ENCODE measurements at regions of chr7 and their contacts with region 1.

Region 1: DNA sequence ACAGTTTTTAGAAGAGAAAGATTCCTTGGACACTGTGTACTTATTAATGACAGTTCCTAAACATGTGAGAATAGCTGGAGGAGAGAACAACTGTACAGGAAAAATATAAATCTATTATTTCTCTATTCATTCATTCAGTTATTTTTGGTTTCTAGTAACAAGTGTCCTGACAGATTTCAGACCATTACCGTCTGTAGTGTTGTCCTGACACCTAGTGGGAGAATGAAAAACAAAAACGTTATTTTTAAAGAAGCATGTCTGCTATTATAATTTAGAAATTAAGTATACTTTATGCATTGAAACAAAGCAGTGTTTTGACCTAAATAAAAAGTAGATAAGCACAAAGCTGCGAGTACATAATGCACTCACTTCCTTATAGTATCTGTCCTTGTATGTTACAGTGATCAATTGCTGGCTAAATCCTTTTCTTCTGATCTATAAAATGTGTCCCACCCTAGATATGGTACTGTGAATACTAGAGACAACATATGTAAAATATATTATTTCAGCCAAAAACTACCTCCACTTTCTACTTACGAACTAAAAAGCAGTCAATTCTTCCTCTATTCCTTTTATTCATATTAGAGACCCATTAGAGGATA is 575.6 kb downstream of the ARL4A start:
- DNase-seq: peak; percentile 6
- CTCF ChIP-seq: peak; percentile 32

Region 2: GRCh38 chr7:12524794-12525386 is 738.1 kb before region 1 on chr7:
- CTCF ChIA-PET with region 1: interaction called, 10 read pairs
- POLR2A ChIA-PET with region 1: no interaction called
- DNase-seq: peak; percentile 17
- CTCF ChIP-seq: peak; percentile 54

Region 3: GRCh38 chr7:12638851-12639467 is 624.1 kb before region 1 on chr7:
- CTCF ChIA-PET with region 1: interaction called, 12 read pairs
- POLR2A ChIA-PET with region 1: no interaction called
- DNase-seq: peak; percentile 17
- CTCF ChIP-seq: peak; percentile 45

Region 4: DNA sequence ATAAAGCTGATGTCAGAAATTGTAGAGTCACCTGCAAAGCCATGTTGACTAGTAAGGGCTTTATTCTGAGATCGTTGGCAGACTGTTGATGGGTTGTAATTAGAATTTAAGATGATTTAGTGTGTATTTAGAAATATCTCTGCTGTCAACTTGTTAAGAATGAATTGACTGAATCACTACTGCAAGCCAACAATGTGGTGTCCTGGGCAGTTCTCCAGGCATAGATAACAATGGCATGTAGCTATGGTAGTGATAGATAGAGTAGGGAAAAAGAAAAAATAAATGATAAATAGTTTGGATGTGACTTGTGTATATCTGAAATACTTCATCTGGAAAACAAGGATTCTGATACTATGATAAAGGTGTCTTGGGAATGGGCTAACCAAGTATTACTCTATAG is 64.6 kb after region 1 on chr7:
- CTCF ChIA-PET with region 1: no interaction called
- POLR2A ChIA-PET with region 1: no interaction called
- DNase-seq: no peak
- CTCF ChIP-seq: no peak